HEK293 (cell line): ENCODE measurements at regions of chr6 and their contacts with region 1.

Region 1: GRCh38 chr6:38034274-38034914 is 214.9 kb downstream of the ZFAND3 start:
- H3K4me3 ChIP-seq: no peak overlapping the region
- H3K27ac ChIP-seq: no peak overlapping the region
- H3K4me1 ChIP-seq: peaks cover 5% of the 10 kb centered on the region; the same call in 1 of the 2 replicates
- CTCF ChIP-seq: 0 out of 2 replicates have a peak, but pooled peaks have one; percentile 38

Region 2: DNA sequence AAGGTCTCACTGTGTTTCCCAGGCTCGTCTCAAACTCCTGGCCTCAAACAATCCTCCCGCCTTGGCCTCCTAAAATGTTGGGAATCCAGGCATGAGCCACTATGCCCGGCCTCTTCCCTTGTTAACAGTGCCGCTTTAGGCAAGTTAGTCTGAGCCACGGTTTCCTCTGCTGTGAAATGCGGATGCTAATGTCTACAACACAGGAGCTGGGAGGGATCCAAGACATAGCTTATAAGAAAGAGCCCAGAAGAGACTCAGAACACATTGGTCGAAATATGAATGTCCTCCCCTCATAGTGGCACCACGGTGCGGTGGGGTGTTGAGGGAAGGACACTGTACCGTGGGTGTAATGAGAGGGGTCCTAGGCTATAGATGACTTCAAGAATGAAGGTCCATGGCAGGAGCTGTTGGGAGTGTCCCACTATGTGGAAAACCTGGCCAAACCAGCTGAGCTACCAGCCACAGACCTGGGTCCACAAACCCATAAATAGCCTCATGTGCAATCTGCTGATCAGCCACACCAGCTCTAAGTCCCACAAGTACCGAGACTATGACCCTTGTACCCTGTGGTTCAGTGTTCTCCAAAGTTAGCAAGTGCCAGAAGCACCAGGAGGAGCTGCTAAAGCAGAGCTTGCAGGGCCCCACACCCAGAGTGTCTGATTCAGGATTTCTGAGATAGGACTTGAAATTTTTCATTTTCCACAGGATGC is 272.7 kb before region 1 on chr6:
- CTCF ChIA-PET with region 1: no interaction called
- POLR2A ChIA-PET with region 1: no interaction called
- H3K4me3 ChIP-seq: no peak overlapping the region
- H3K27ac ChIP-seq: no peak overlapping the region
- H3K4me1 ChIP-seq: peaks cover 3% of the 10 kb centered on the region
- CTCF ChIP-seq: no peak

Region 3: GRCh38 chr6:38016824-38017223 is 17.6 kb before region 1 on chr6:
- CTCF ChIA-PET with region 1: interaction called, 18 read pairs
- POLR2A ChIA-PET with region 1: no interaction called
- H3K4me3 ChIP-seq: no peak overlapping the region
- H3K27ac ChIP-seq: no peak overlapping the region
- H3K4me1 ChIP-seq: peaks cover 19% of the 10 kb centered on the region
- CTCF ChIP-seq: no peak

Region 4: DNA sequence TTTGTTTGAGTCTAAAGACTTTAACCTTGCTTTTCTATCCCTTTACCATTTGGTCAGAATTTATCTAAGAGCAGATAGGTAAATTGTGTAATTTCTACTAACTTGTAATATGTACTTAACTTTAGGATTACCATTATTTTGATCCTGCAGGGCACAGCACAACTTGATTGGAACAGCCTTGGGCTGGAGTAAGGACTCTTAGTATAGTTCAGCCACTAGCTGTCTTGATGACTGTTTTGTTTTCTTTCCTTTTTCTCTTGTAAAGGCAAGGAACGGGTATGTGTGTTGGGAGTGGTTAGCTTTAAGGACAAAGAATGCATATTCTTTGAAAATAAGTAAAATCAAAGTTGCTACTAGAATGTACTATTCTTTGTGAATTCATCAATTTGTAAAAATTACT is 11.7 kb before region 1 on chr6:
- CTCF ChIA-PET with region 1: interaction called, 18 read pairs
- POLR2A ChIA-PET with region 1: no interaction called
- H3K4me3 ChIP-seq: no peak overlapping the region
- H3K27ac ChIP-seq: no peak overlapping the region
- H3K4me1 ChIP-seq: peaks cover 22% of the 10 kb centered on the region
- CTCF ChIP-seq: no peak

Region 5: GRCh38 chr6:38045701-38046305 is 11.4 kb after region 1 on chr6:
- CTCF ChIA-PET with region 1: interaction called, 14 read pairs
- POLR2A ChIA-PET with region 1: no interaction called
- H3K4me3 ChIP-seq: no peak overlapping the region
- H3K27ac ChIP-seq: no peak overlapping the region
- H3K4me1 ChIP-seq: no peaks in the 10 kb centered on the region
- CTCF ChIP-seq: no peak

Region 6: GRCh38 chr6:38169977-38170526 is 135.7 kb after region 1 on chr6:
- CTCF ChIA-PET with region 1: no interaction called
- POLR2A ChIA-PET with region 1: no interaction called
- H3K4me3 ChIP-seq: no peak overlapping the region
- H3K27ac ChIP-seq: no peak overlapping the region
- H3K4me1 ChIP-seq: no peaks in the 10 kb centered on the region
- CTCF ChIP-seq: no peak